Heart right ventricle (tissue), 16 donors: ENCODE measurements at regions of chr3 and their contacts with region 1.

Region 1: DNA sequence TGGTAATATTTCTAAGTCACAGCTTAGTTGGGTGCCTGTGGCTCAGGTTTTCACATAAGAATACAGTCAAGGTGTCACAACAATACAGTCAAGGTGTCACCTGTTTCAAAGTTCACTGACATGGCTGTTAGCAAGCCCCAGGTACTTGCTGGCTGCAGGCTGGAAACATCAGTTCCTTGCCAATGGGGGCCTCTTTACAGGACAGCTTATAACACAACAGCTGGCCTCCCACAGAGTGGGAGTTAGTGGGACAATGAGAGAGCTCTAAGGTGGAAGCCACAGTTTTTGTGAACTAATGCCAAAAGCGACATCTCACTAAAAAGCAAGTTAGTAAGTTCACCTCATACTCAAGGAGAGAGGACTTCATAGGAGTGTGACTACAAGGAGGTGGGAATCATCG is 45.4 kb downstream of the GPR156 start:
- DNase-seq: no peak
- ATAC-seq: no peak
- H3K4me3 ChIP-seq: no peak overlapping the region
- H3K27ac ChIP-seq: no peak overlapping the region
- H3K4me1 ChIP-seq: no peaks in the 10 kb centered on the region
- H3K27me3 ChIP-seq: peaks cover 0 to 10% (median 0%) of the 10 kb centered on the region in 7 donors
- CTCF ChIP-seq: no peak

Region 2: DNA sequence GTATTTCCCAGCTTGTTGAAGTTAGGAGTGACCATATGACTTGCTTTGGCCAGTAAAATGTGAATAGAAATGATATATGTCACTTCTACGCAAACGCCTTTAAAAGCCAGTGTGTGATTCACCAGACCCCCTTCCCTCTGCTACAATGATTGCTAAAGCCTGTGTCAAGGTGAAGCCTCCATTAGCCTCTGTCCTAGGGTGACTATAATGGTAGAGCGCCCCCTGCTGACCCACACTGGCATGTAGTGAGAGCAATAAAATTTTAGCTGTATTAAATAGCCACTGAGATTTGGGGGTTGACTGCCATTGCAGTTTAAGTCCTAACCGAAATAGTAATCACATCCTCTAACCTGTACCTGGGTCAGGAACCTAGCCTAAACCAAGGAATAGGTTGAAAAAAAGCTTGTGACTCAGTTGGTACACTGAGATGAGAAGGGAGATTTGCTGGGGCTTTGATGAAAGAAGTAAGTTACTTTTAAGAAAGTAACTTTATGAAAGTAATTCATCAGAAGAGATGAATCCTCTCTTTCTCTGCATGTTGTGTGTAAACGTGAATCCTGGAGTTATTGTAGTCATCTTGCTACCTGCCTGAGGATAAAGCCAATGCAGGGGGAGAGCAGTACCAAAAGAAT is 555.5 kb after region 1 on chr3:
- intact Hi-C with region 1: loop called in 6 of 10 experiments (anchors 5 to 10 kb)
- DNase-seq: peak; percentile 74 to 77
- ATAC-seq: peak; percentile 79 to 94 (median 88)
- H3K4me3 ChIP-seq: no peak overlapping the region
- H3K27ac ChIP-seq: no peak overlapping the region
- H3K4me1 ChIP-seq: no peaks in the 10 kb centered on the region
- H3K27me3 ChIP-seq: no peaks in the 10 kb centered on the region
- CTCF ChIP-seq: peak; percentile 63 to 86 (median 81)